ENCODE measurements at regions of chr17 and their contacts with region 1.

Region 1: GRCh38 chr17:64938925-64939474 is 19.7 kb upstream of the LRRC37A3 start:
- DNase-seq: peak; percentile 51 to 61 (median 61)
- H3K4me3 ChIP-seq: peak overlapping the region in 2 of 7 experiments; percentile 26 to 39
- H3K27ac ChIP-seq: no peak overlapping the region
- H3K4me1 ChIP-seq: peaks cover 0 to 7% (median 5%) of the 10 kb centered on the region in 4 experiments
- H3K27me3 ChIP-seq: no peaks in the 10 kb centered on the region

Region 2: GRCh38 chr17:64920026-64920418 is 19.0 kb before region 1 on chr17:
- CTCF ChIA-PET with region 1: interaction called, 10 read pairs
- POLR2A ChIA-PET with region 1: no interaction called
- DNase-seq: peak in 2 of 3 donors; percentile 10 to 29
- H3K4me3 ChIP-seq: peak overlapping the region; percentile 2 to 82 (median 63)
- H3K27ac ChIP-seq: peak overlapping the region; percentile 68 to 89
- H3K4me1 ChIP-seq: peaks cover 0 to 37% (median 28%) of the 10 kb centered on the region in 4 experiments
- H3K27me3 ChIP-seq: no peaks in the 10 kb centered on the region

Region 3: GRCh38 chr17:64950871-64951270 is 11.9 kb after region 1 on chr17:
- CTCF ChIA-PET with region 1: interaction called, 13 read pairs
- POLR2A ChIA-PET with region 1: no interaction called
- DNase-seq: no peak
- H3K4me3 ChIP-seq: no peak overlapping the region
- H3K27ac ChIP-seq: no peak overlapping the region
- H3K4me1 ChIP-seq: peaks cover 0 to 3% (median under 1%) of the 10 kb centered on the region in 4 experiments
- H3K27me3 ChIP-seq: no peaks in the 10 kb centered on the region

Region 4: GRCh38 chr17:64968652-64969501 is 29.9 kb after region 1 on chr17:
- CTCF ChIA-PET with region 1: interaction called, 59 read pairs
- POLR2A ChIA-PET with region 1: no interaction called
- DNase-seq: peak; percentile 29 to 79 (median 69)
- H3K4me3 ChIP-seq: peak overlapping the region in 1 of 7 experiments; percentile 10
- H3K27ac ChIP-seq: no peak overlapping the region
- H3K4me1 ChIP-seq: peaks cover 33 to 62% (median 51%) of the 10 kb centered on the region in 4 experiments
- H3K27me3 ChIP-seq: no peaks in the 10 kb centered on the region

Measured in common myeloid progenitor, CD34-positive (primary cell).